Mammary epithelial cell (primary cell): ENCODE measurements at regions of chr5 and their contacts with region 1.

Region 1: DNA sequence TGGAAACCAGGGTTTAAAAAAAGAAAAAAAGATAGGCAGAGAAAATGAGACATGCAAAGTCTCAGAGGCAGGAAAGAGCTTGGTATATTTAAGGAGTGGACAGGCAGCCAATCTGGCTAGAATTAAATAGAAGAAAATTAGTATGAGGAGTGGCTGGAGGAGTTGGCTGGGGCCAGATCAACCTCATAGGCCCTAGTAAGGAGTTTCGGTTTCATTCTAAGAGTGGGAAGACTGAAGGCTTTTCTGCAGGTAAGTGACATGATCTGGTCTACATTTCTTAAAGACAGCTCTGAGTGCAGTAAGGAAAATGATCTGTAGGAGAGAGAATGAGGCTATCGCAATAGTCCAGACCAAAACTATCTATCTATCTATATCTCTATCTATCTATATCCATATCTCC is 27.5 kb downstream of the ADRB2 start:
- DNase-seq: no peak
- H3K4me3 ChIP-seq: no peak overlapping the region
- H3K27ac ChIP-seq: no peak overlapping the region
- H3K4me1 ChIP-seq: no peaks in the 10 kb centered on the region
- H3K27me3 ChIP-seq: no peaks in the 10 kb centered on the region
- CTCF ChIP-seq: no peak

Region 2: DNA sequence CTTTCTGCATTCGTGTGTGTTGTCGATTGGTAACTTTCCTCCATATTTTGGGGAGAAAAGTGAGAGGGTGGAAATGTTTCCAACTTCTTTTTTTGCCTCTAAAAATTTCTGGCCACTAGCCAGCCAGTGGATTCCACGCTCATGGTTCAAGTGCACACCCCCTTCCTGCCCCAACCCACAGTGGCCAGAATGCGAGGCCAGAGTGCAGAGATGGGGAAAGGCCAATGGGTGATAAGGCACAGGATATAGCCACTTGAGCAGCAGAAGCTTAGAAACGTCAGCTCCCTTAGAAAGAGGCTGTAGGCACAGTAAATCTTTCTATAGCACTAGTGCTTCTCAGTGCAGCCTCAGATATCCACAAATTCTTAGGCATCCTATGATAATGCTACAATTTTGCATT is 103.3 kb before region 1 on chr5:
- CTCF ChIA-PET with region 1: no interaction called
- dilution Hi-C with region 1: loop called (anchors 5 kb)
- in situ Hi-C with region 1: no loop called
- intact Hi-C with region 1: no loop called
- DNase-seq: no peak
- H3K4me3 ChIP-seq: no peak overlapping the region
- H3K27ac ChIP-seq: no peak overlapping the region
- H3K4me1 ChIP-seq: peaks cover 5% of the 10 kb centered on the region
- H3K27me3 ChIP-seq: no peaks in the 10 kb centered on the region
- CTCF ChIP-seq: no peak

Region 3: DNA sequence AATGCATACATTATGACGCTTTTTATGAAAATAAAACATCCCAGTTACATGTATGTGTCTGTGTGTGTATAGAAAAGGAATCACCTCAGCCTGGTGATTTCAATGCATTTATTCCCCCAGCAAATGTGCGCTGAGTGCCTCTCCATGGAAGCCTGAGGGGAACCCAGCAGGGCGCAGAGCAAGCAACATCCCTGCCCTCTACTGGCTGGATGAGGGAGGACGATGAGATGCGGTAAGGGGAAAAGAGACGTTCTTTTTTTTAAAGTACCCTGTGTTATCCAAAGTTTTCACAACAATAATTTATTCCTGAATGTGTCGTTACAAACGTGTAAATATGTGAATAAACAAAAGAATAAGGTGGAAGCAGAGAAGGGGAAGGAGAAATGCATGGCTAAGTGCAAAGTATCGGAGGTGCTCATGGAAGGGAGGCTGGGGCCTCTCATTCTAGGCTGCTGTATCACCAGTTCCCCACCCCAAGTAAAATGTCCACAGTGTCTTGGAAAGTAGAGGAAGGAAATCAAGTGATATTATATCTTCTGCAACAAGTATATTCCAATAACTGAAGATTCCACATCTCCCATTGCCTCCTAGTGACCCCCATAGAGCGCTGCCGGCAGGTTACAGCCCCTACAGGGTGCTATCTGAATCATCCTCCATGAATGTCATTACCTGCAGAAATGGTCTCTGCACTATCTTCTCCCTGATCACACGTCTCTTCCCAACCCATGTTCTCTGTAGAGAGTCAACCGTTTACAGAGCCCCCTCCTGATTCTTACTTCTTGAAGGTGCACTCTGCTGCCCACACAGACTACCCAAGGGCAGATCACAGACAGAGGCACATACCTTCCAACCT is 274.4 kb after region 1 on chr5:
- CTCF ChIA-PET with region 1: no interaction called
- dilution Hi-C with region 1: no loop called
- in situ Hi-C with region 1: no loop called
- intact Hi-C with region 1: no loop called
- DNase-seq: no peak
- H3K4me3 ChIP-seq: no peak overlapping the region
- H3K27ac ChIP-seq: no peak overlapping the region
- H3K4me1 ChIP-seq: peaks cover 58% of the 10 kb centered on the region
- H3K27me3 ChIP-seq: no peaks in the 10 kb centered on the region
- CTCF ChIP-seq: peak; percentile 70 to 76